CD8-positive, alpha-beta T cell (primary cell): ENCODE measurements at regions of chr6 and their contacts with region 1.

Region 1: GRCh38 chr6:137399881-137400443 is 94.2 kb downstream of the OLIG3 start:
- DNase-seq: no peak
- ATAC-seq: no peak
- H3K4me3 ChIP-seq: no peak overlapping the region
- H3K4me3 Mint-ChIP-seq: no peak overlapping the region
- H3K27ac ChIP-seq: no peak overlapping the region
- H3K27ac Mint-ChIP-seq: no peak overlapping the region
- H3K4me1 ChIP-seq: no peaks in the 10 kb centered on the region
- H3K4me1 Mint-ChIP-seq: peaks cover 9% of the 10 kb centered on the region
- H3K27me3 ChIP-seq: no peaks in the 10 kb centered on the region
- H3K27me3 Mint-ChIP-seq: no peaks in the 10 kb centered on the region
- CTCF ChIP-seq: no peak

Region 2: DNA sequence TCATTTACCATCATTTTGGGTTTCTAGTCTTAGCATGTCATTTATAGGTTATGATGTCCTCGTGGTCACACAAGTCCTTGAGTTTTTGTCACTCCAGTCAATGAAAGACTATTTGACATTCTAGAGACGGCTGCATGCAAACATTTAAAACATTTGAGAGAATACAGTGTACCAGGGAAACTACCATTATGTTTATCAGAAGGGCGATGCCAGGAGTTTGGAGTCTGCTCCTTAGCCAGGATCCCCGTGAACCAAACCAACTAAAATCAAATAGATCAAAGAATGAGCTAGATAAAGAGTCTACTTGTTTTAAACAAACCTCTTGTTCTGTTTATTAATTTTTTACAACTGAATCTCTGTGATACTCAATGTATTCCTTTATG is 28.3 kb before region 1 on chr6:
- CTCF ChIA-PET with region 1: no interaction called
- POLR2A ChIA-PET with region 1: no interaction called
- intact Hi-C with region 1: loop called in 1 of 2 experiments (anchors 2 kb)
- DNase-seq: no peak
- ATAC-seq: no peak
- H3K4me3 ChIP-seq: no peak overlapping the region
- H3K4me3 Mint-ChIP-seq: no peak overlapping the region
- H3K27ac ChIP-seq: no peak overlapping the region
- H3K27ac Mint-ChIP-seq: no peak overlapping the region
- H3K4me1 ChIP-seq: no peaks in the 10 kb centered on the region
- H3K4me1 Mint-ChIP-seq: peaks cover 11% of the 10 kb centered on the region
- H3K27me3 ChIP-seq: no peaks in the 10 kb centered on the region
- H3K27me3 Mint-ChIP-seq: no peaks in the 10 kb centered on the region
- CTCF ChIP-seq: no peak